ACHN (cell line): ENCODE measurements at regions of chr16 and their contacts with region 1.

Region 1: GRCh38 chr16:26963114-26963513 is 103.6 kb upstream of the C16orf82 start:
- DNase-seq: peak; percentile 27

Region 2: DNA sequence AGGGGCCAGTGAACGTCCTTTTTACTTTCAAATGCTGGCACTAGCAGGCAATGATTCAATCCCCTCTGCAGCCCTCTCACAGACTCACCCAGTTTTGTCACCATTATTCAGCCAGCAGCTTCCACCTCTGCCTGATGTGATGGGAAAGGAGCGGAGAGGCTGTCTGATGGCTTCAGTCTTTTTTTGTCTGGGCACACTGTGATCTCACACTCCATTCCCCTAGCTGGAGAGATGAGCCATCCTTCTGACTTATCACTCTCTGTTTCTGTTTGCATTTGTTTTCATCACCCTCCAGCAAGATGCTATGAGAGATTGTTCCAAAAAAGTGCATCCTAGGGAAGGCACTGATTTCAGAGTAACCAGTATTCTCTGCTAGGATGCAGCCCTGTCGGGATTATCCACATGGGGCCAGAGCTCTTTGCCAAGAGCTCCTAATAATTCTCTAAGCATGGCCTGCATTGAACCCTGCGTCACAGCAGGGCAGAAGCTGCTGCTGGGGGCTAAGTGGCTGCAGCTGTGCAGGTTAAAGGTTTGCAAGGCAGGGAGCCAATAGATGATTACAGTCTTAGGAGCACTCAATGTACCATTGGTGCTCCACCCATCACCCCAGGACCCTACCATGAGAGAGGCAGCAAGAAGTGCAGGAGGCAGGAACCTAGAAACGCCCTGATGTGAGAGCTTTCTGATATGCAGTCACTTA is 132.5 kb before region 1 on chr16:
- in situ Hi-C with region 1: loop called (anchors 25 kb)
- DNase-seq: no peak

Region 3: DNA sequence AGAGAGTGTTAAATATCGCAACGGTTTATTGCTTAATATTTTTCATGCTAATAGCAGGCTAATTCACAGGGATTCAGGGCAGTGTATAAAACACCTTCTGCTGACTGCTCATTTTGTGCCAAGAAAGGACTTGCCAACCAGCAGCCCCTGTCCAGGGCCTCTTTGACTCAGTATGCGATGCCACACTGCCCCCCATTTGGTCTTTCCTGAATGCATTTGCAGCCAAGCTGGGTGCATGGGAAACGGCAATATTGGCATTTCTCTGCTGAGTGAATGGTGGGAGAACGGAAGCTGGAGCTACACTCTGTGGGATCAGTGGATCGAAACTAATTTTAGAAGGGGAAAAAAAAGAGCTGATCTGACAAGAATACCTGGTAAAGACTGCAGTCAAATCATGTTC is 49.3 kb before region 1 on chr16:
- in situ Hi-C with region 1: no loop called
- DNase-seq: no peak

Region 4: GRCh38 chr16:27066668-27067537 is 103.8 kb after region 1 on chr16 and contains the start of gene C16orf82:
- in situ Hi-C with region 1: loop called (anchors 25 kb)
- DNase-seq: no peak